Body of pancreas (tissue), 4 donors: ENCODE measurements at regions of chr9 and their contacts with region 1.

Region 1: DNA sequence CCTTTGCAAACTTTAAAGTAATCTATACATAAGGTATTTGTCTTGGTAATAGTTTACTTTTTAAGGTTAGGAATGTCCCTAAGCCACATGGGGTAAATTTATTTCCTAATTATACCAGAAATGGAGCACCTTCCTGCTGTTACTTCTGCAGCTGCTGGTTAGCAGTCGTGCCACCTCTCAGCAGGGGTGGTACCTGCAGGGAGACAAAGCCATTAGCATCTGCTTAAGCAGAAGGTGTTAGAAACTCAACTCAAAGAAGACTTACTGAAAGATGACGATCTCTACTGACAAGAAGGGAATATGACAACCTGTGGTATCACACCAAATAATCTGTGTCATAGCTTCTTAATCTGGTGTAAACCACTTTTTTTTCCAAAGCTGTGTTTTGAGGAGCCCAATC is 173.7 kb downstream of the BRINP1 start:
- DNase-seq: no peak
- ATAC-seq: no peak
- H3K4me3 ChIP-seq: no peak overlapping the region
- H3K27ac ChIP-seq: no peak overlapping the region
- H3K4me1 ChIP-seq: no peaks in the 10 kb centered on the region
- H3K27me3 ChIP-seq: no peaks in the 10 kb centered on the region
- CTCF ChIP-seq: no peak
- POLR2A ChIP-seq: no peak

Region 2: DNA sequence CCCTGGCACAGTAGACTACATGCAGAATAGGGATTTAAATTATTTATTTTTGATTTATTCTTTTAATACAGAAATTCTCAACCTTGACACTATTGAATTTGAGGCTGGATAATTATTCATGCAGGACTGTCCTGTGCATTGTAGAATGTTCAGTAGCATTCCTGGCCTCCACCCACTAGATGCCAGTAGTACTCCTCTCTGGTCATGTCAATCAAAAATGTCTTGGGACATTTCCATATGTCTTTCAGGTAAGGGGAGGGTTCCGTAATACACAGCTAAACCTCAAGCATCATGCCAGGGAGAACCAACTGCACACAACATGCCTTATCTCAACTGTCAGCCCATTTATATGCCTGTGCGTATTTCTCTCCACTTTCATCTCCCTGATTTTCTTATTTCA is 58.0 kb before region 1 on chr9:
- intact Hi-C with region 1: loop called (anchors 10 kb)
- DNase-seq: no peak
- ATAC-seq: no peak
- H3K4me3 ChIP-seq: no peak overlapping the region
- H3K27ac ChIP-seq: no peak overlapping the region
- H3K4me1 ChIP-seq: no peaks in the 10 kb centered on the region
- H3K27me3 ChIP-seq: no peaks in the 10 kb centered on the region
- CTCF ChIP-seq: no peak
- POLR2A ChIP-seq: no peak